Gastrocnemius medialis (tissue), 4 donors: ENCODE measurements at regions of chr21 and their contacts with region 1.

Region 1: DNA sequence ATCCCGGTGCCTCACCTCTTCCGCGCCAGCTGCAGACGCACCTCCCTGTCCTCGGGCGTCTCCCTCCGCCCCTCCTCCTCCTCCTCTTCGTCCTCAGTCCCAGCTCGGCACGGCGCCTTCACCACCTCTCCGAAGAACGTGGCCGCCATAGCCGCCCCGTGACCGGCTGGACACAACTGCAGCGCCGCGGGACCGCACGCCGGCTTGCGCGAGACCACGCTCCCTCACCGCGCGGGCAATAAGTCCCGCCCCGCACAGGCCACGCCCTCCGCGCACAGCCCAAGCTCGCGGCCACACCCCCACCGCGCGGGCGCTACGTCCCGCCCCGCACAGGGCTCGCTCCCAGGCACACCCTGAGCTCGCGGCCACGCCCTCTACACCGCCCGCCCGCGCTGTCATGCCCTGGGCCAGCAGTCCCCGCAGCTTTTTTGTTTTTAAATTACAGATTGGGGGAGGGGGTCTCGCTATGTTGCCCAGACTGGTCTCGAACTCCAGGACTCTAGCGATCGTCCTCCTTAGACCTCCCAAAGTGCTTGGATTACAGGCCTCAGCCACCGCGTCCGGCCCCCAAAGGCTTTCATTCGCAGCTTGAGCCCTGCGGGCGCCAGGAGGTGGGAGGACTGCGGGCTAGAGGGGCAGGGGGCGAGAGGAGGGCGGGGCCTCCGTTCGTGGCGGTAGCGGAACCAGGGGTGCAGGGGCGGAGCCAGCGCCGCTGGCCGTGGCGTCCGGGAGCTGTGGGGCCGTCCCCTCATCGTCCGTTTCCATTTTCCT is at the start of gene PSMG1:
- DNase-seq: peak; percentile 88 to 94
- ATAC-seq: peak; percentile 84 to 86
- H3K4me3 ChIP-seq: peak within 1 kb of the TSS; percentile 76 to 96 (median 82)
- H3K27ac ChIP-seq: peak within 1 kb of the TSS; percentile 88 to 97 (median 94)
- H3K4me1 ChIP-seq: peaks cover 7 to 8% of the 10 kb centered on the region in 2 donors
- H3K27me3 ChIP-seq: no peaks in the 10 kb centered on the region
- CTCF ChIP-seq: no peak
- POLR2A ChIP-seq: peak; percentile 88 to 92
- total RNA-seq, gene PSMG1: 12.9 to 53.5 (median 30.3) TPM

Region 2: DNA sequence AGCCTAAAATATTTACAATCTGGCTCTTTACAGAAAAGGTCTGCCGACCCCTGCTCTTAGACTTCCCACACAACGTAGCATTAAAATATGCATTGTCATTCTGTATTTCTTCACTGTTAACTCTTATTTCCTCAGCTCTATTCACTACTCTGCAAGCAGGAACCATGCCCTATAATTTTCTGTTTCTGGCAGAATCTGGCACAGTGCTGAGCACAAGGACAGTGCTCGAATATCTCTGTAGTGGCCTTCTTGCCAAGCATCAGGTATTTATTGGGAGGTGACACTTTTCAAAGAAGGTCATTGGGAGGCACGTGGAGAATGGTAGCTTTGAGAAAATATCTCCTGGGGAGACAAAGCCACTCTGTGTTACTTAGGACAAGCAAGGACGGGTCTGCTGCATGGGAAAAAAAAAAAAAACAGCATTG is 78.1 kb before region 1 on chr21:
- in situ Hi-C with region 1: loop called in 1 of 4 experiments (anchors 10 kb)
- intact Hi-C with region 1: no loop called
- DNase-seq: no peak
- ATAC-seq: peak; percentile 27 to 60
- H3K4me3 ChIP-seq: no peak overlapping the region
- H3K27ac ChIP-seq: peak overlapping the region; percentile 42 to 49 (median 44)
- H3K4me1 ChIP-seq: peaks cover 11 to 24% of the 10 kb centered on the region in 2 donors
- H3K27me3 ChIP-seq: no peaks in the 10 kb centered on the region
- CTCF ChIP-seq: no peak
- POLR2A ChIP-seq: no peak

Region 3: DNA sequence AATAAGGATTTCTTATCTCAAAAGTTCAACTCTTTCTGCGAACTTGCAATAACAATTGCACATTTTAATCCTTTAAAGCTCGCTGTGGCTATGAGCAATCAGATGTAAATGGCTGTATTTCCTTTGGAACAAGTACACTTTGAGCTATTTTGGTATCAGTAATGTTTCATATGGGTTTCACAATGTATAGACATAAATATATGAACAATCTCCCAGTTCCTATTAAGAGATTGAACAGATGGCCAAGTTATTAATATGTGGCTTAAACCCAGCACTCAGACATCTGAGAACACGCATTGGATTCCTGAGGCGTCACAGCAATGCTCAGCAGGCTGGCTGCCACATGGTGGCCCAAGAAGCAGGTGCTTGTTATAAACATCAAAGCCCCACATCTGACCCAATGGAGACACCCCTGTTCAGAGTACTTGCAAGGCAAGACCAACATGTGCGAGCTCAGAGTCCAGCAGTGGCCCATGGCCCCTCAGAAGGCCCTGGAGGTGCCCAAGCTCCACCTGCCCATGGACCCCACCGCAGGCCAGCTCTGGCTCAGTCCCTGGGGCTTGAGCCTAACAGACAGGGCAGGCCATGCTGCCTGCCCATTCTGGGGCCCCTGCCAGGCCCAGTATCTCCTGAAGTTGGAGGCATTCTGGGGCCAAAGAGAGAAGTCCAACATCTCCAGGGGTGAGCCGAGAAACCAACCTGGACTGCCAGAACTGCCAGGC is 23.9 kb before region 1 on chr21:
- in situ Hi-C with region 1: no loop called
- intact Hi-C with region 1: loop called (anchors 1 kb)
- DNase-seq: no peak
- ATAC-seq: no peak
- H3K4me3 ChIP-seq: no peak overlapping the region
- H3K27ac ChIP-seq: no peak overlapping the region
- H3K4me1 ChIP-seq: peaks cover 0 to 7% of the 10 kb centered on the region in 2 donors
- H3K27me3 ChIP-seq: no peaks in the 10 kb centered on the region
- CTCF ChIP-seq: no peak
- POLR2A ChIP-seq: no peak

Region 4: GRCh38 chr21:39251326-39251725 is 67.9 kb after region 1 on chr21:
- in situ Hi-C with region 1: no loop called
- intact Hi-C with region 1: no loop called
- DNase-seq: no peak
- ATAC-seq: no peak
- H3K4me3 ChIP-seq: no peak overlapping the region
- H3K27ac ChIP-seq: no peak overlapping the region
- H3K4me1 ChIP-seq: peaks cover 0 to 7% of the 10 kb centered on the region in 2 donors
- H3K27me3 ChIP-seq: no peaks in the 10 kb centered on the region
- CTCF ChIP-seq: no peak
- POLR2A ChIP-seq: no peak

Region 5: DNA sequence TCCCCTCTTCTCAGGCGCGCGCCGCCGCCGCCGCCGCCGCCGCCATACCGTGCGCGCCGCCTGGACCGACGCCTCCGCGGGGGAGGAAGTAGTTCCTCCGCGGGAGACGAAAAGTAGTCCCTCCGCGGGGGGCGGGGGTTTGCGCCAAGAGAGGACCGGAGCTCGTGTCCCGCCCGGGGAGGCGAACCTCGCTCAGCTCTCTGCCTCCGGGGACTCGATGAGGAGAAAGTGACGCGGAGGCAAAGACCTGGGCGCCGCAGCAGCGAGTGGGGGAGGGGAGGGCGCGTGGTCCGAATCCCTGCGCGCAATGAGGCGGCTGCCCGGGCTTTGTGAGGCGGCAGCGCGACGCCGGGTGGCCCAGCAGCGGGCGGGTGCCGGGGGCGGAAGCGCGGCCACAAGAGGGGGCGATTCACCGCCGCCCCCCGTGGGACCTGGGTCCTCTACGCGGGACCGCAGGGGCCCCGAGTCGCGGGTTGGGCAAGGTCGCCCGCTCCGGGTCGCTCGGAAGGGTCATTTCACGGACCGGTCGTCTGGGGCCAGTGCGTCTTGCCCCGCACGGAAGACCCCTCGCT is 130.2 kb after region 1 on chr21 and contains the start of gene BRWD1:
- in situ Hi-C with region 1: no loop called
- intact Hi-C with region 1: loop called (anchors 1 kb)
- DNase-seq: peak; percentile 70 to 75
- ATAC-seq: peak; percentile 73
- H3K4me3 ChIP-seq: peak within 1 kb of the TSS; percentile 87 to 99 (median 96)
- H3K27ac ChIP-seq: peak within 1 kb of the TSS; percentile 91 to 99 (median 98)
- H3K4me1 ChIP-seq: peaks cover 14 to 15% of the 10 kb centered on the region in 2 donors
- H3K27me3 ChIP-seq: no peaks in the 10 kb centered on the region
- CTCF ChIP-seq: peak in 4 of 5 experiments; percentile 38 to 68 (median 52)
- POLR2A ChIP-seq: peak; percentile 77 to 80
- total RNA-seq, gene BRWD1: 42.2 to 65.7 (median 50.4) TPM

Region 6: DNA sequence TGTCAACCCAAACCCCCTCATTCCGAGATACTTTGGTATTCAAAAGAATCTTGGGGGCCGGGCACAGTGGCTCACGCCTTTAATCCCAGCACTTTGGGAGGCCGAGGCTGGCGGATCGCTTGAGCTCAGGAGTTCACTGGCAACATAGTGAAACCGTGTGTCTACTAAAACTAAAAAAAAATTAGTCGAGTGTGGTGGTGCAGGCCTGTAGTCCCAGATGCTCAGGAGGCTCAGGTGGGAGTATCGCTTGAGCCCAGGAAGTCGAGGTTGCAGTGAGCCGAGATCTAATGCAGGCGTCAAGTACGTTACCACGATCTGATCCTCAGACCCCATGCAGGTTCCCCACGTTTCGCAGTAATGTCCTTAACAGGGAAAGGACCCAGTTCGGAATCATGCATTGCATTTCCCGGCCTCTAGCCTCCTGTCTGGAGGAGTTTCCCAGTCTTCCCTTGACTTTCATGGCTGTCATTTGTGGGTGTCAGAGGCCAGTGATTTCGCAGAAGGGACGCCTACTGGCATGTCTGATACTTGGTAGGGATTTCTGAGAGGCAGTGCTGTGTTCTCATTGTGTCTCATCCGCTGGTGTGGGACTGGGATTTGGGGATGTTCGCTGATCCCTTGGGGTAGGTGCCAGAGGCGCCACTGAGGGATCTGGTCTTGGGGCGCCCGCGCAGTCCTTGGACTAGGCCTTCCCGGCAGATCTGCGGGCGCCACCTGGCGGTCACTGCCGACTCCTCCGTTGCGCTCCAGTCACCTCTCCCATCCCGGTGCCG is 204.8 kb after region 1 on chr21:
- in situ Hi-C with region 1: loop called in 3 of 4 experiments (anchors 5 to 25 kb)
- intact Hi-C with region 1: loop called (anchors 5 kb)
- DNase-seq: peak; percentile 74 to 85
- ATAC-seq: peak; percentile 63 to 70
- H3K4me3 ChIP-seq: peak overlapping the region; percentile 50 to 69 (median 61)
- H3K27ac ChIP-seq: peak overlapping the region; percentile 79 to 86 (median 83)
- H3K4me1 ChIP-seq: peaks cover 14 to 26% of the 10 kb centered on the region in 2 donors
- H3K27me3 ChIP-seq: no peaks in the 10 kb centered on the region
- CTCF ChIP-seq: peak; percentile 73 to 97 (median 91)
- POLR2A ChIP-seq: no peak

Region 7: DNA sequence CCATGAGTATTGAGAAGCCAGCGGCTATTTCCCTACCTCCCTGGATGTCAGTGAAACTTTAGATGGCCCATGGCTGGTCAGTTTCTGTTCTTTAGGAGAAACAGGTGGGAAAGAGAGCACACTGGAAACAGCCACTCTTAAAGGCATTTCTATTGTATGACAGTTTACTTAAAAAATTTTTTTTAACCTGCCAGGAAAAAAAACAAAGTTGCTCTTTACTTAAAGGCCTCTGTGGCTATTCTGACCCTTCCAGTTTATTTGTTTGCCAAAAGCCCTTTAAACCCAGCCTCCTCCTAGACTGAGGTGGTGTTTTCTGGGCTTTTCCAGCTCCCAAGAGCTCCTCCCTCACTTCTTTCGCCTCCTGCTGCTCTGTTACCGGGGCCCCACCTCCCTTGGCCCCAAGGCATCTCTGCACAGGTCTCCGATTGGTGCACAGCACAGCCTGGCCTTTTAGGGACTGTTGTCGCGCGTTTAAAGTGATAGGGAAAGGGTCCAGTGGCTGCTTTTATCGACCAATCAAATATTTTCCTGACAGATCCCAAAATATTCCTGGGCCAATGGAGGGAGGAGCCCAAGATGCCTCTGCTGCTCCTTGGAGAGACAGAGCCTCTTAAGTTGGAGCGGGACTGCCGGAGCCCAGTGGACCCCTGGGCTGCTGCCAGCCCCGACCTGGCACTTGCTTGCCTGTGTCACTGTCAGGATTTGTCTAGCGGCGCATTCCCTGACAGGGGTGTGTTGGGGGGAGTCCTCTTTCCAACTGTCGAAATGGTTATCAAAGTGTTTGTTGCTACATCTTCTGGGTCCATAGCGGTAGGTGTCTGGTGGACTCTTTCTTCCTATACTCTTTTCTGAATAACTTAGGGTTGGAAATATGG is 268.1 kb after region 1 on chr21 and contains the start of gene SH3BGR:
- in situ Hi-C with region 1: no loop called
- intact Hi-C with region 1: loop called (anchors 5 kb)
- DNase-seq: peak; percentile 90 to 94
- ATAC-seq: peak; percentile 88
- H3K4me3 ChIP-seq: peak within 1 kb of the TSS; percentile 57 to 68 (median 64)
- H3K27ac ChIP-seq: peak within 1 kb of the TSS; percentile 88 to 95 (median 90)
- H3K4me1 ChIP-seq: peaks cover 28 to 43% of the 10 kb centered on the region in 2 donors
- H3K27me3 ChIP-seq: no peaks in the 10 kb centered on the region
- CTCF ChIP-seq: no peak
- POLR2A ChIP-seq: peak; percentile 72 to 90
- total RNA-seq, gene SH3BGR: 92.9 to 182 (median 149) TPM